Breast epithelium (tissue), 4 donors: ENCODE measurements at regions of chr17 and their contacts with region 1.

Region 1: DNA sequence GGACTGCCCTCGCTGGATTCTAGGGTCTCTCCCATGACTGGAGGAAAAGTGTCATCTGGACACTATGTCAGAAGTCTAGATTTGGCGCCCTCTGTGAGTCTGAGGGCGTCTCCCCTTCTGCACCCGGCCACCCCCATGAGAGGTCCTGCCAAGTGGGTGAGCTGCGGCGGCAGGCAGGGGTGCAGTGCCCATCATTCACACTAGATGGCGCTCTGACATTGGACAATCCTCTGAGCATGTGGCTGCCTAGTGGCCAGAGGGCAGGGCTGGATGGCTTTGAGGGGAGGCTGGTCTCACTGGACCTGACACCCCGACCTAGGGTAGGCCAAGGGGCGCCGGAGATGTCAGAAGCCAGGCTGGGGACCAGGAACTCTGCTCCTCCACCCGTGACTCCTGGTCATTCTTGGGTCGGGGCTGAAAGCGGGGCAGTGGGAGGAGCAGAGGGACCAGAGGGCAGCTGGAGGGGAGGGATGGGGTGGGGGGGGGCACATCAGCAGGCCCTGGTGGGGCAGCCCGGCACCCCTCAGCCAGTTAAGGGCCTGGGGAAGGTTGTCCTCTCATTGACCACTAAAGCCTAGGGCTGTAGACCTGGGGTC is 28.0 kb downstream of the MRM1 start:
- DNase-seq: peak; percentile 36 to 79
- H3K4me3 ChIP-seq: no peak overlapping the region
- H3K27ac ChIP-seq: no peak overlapping the region
- H3K4me1 ChIP-seq: no peaks in the 10 kb centered on the region
- H3K27me3 ChIP-seq: no peaks in the 10 kb centered on the region
- CTCF ChIP-seq: peak; percentile 59 to 96 (median 90)
- POLR2A ChIP-seq: no peak

Region 2: GRCh38 chr17:36475346-36475970 is 153.9 kb before region 1 on chr17:
- intact Hi-C with region 1: no loop called
- DNase-seq: no peak
- H3K4me3 ChIP-seq: no peak overlapping the region
- H3K27ac ChIP-seq: no peak overlapping the region
- H3K4me1 ChIP-seq: no peaks in the 10 kb centered on the region
- H3K27me3 ChIP-seq: peaks cover 0 to 8% of the 10 kb centered on the region in 2 donors
- CTCF ChIP-seq: no peak
- POLR2A ChIP-seq: no peak

Region 3: DNA sequence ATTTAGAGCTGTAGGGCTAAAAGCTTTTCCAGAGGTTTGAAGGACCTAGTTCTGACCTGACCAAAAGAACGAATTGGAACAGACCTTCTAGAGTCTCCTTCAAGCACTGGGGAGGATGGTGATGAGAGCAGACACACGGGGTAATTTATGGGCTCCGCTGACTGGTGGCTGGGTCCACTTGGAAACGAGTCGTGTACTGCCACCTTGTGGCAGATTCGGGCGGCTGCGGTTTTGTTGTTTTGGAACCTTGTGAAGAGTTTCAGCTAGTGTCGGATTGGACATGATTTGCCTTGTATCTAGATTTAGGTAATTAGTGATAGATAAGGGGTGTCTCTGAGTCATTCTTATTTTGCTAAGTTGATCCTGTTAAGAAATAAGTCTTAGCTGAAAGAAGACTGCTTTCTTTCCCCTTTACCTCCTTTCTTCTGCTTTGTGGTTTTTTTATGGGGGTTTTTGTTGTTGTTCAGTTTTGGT is 418.3 kb after region 1 on chr17:
- intact Hi-C with region 1: loop called (anchors 10 kb)
- DNase-seq: peak; percentile 54 to 81
- H3K4me3 ChIP-seq: no peak overlapping the region
- H3K27ac ChIP-seq: no peak overlapping the region
- H3K4me1 ChIP-seq: no peaks in the 10 kb centered on the region
- H3K27me3 ChIP-seq: no peaks in the 10 kb centered on the region
- CTCF ChIP-seq: peak; percentile 55 to 82 (median 77)
- POLR2A ChIP-seq: no peak